PC-9 (cell line): ENCODE measurements at regions of chr4 and their contacts with region 1.

Region 1: GRCh38 chr4:140756319-140757231 is at the start of gene TBC1D9:
- DNase-seq: peak; percentile 80 to 84
- H3K4me3 ChIP-seq: peak within 1 kb of the TSS; percentile 78
- H3K27ac ChIP-seq: peak within 1 kb of the TSS; percentile 81
- H3K4me1 ChIP-seq: peaks cover 15% of the 10 kb centered on the region
- H3K27me3 ChIP-seq: no peaks in the 10 kb centered on the region
- CTCF ChIP-seq: no peak
- total RNA-seq, gene TBC1D9: 17.0 and 17.6 TPM in 2 replicates

Region 2: GRCh38 chr4:140609548-140610425 is 146.8 kb before region 1 on chr4:
- CTCF ChIA-PET with region 1: no interaction called
- POLR2A ChIA-PET with region 1: no interaction called
- intact Hi-C with region 1: no loop called
- DNase-seq: no peak
- H3K4me3 ChIP-seq: no peak overlapping the region
- H3K27ac ChIP-seq: no peak overlapping the region
- H3K4me1 ChIP-seq: no peaks in the 10 kb centered on the region; the same call in 1 of the 2 replicates
- H3K27me3 ChIP-seq: no peaks in the 10 kb centered on the region
- CTCF ChIP-seq: peak; percentile 68

Region 3: DNA sequence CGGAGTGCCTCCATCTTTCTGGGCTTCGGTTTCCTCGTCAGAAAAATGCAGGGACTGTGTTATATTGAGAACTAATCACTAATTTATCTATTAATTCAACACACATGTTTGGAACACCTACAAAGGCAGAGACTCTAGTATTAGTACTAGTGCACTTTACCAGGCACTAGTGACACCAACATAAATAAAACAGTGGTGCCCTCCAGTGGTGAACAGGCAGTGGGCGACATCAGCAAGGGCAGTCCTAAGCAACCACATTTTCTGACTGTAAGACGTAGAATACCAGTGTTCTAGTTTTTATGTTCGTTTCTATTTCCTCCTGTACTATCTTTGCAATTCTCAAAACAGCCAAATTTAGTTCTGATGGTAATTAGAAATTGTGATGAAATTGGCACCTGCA is 118.7 kb before region 1 on chr4:
- CTCF ChIA-PET with region 1: no interaction called
- POLR2A ChIA-PET with region 1: interaction called, 7 read pairs
- intact Hi-C with region 1: loop called (anchors 2 kb)
- DNase-seq: no peak
- H3K4me3 ChIP-seq: no peak overlapping the region
- H3K27ac ChIP-seq: no peak overlapping the region
- H3K4me1 ChIP-seq: peaks cover 23% of the 10 kb centered on the region
- H3K27me3 ChIP-seq: no peaks in the 10 kb centered on the region
- CTCF ChIP-seq: peak; percentile 63

Region 4: GRCh38 chr4:140726776-140727500 is 29.6 kb before region 1 on chr4:
- CTCF ChIA-PET with region 1: no interaction called
- POLR2A ChIA-PET with region 1: interaction called, 16 read pairs
- intact Hi-C with region 1: loop called (anchors 1 kb)
- DNase-seq: peak; percentile 29 to 89
- H3K4me3 ChIP-seq: peak overlapping the region; percentile 31; the same call in 1 of the 2 replicates
- H3K27ac ChIP-seq: peak overlapping the region; percentile 85
- H3K4me1 ChIP-seq: peaks cover 53% of the 10 kb centered on the region
- H3K27me3 ChIP-seq: no peaks in the 10 kb centered on the region
- CTCF ChIP-seq: no peak

Region 5: DNA sequence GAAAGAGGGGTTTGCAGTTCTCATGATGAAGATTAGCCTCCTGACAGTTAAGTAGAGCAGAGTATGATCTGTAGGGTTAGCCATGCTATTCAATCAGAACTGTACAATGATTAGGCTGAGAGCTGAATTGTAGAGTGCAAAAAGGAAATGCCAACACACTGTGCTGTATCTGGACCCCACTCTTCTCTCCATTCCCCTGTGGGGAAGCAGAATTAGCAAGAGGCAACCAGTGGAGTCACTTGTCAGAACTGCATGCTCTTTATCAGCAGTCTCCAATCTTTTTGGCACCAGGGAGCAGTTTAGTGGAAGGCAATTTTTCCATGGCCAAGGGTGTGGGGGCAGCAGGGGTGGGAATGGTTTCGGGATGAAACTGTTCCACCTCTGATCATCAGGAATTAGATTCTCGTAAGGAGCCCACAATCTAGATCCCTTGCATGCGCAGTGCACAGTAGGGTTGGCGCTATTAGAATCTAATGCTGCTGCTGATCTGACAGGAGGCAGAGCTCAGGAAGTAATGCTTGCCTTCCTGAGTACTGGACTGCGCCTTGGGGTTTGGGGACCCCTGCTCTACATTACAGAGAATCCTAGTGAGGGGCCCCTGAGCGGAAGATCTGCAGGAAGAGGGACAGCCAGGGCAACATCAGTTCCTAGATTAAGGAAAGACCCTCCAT is 19.8 kb before region 1 on chr4:
- CTCF ChIA-PET with region 1: no interaction called
- POLR2A ChIA-PET with region 1: interaction called, 35 read pairs
- intact Hi-C with region 1: no loop called
- DNase-seq: no peak
- H3K4me3 ChIP-seq: no peak overlapping the region
- H3K27ac ChIP-seq: no peak overlapping the region
- H3K4me1 ChIP-seq: peaks cover 13% of the 10 kb centered on the region
- H3K27me3 ChIP-seq: no peaks in the 10 kb centered on the region
- CTCF ChIP-seq: no peak

Region 6: DNA sequence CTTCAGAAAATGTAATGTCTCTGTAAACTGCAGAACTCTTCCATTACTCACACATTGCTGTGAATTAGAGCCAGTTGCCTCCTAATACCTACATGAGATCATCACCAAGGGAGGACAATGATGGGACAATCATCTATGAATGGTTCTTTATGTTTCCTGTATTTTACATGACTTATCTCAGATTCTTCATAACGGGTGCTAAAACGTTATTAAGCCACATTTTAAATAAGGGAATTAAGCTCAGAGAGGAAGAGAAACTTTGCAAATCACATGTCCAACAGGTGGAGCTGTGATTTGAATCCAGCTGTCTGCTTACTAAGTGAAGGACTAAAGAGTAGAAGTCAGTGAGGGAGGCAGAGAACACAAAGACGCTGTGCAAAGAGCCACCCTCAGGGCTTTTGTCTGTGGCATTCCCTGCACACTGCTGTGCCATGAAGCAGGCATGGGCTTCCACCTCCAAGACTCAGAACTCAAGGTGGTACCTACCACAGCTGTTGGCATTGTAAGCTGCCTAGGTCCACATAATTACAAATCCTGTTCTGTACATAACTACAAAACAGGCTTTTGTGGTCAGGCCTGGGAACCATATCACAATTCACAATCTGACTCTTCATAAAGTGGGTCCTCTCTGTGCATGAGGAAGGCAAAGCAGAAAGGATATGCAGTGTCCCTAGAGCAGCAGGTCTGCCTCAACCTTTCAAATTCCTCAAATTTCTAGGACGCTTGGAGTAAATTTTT is 13.2 kb before region 1 on chr4:
- CTCF ChIA-PET with region 1: interaction called, 3 read pairs
- POLR2A ChIA-PET with region 1: no interaction called
- intact Hi-C with region 1: loop called (anchors 1 kb)
- DNase-seq: peak in 1 of 2 experiments; percentile 28
- H3K4me3 ChIP-seq: no peak overlapping the region
- H3K27ac ChIP-seq: no peak overlapping the region
- H3K4me1 ChIP-seq: peaks cover 21% of the 10 kb centered on the region
- H3K27me3 ChIP-seq: no peaks in the 10 kb centered on the region
- CTCF ChIP-seq: no peak; the same call in 1 of the 2 replicates

Region 7: DNA sequence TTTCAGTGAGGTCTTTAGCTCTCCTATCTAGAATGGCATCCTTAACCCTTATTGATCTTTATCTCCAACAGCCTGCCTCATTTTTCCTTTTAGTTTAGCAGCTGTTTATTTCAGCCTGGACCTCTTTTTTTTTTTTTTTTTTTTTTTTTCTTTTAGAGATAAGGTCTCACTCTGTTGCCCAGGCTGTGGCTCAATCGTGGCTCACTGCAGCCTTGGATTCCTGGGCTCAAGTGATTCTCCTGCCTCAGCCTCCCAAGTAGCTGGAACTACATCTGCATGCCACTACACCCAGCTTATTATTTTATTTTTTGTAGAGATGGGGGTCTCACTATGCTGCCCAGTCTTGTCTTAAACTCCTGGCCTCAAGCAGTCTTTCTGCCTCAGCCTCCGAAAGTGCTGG is 42.5 kb after region 1 on chr4:
- CTCF ChIA-PET with region 1: no interaction called
- POLR2A ChIA-PET with region 1: interaction called, 12 read pairs
- intact Hi-C with region 1: no loop called
- DNase-seq: no peak
- H3K4me3 ChIP-seq: no peak overlapping the region
- H3K27ac ChIP-seq: no peak overlapping the region
- H3K4me1 ChIP-seq: no peaks in the 10 kb centered on the region
- H3K27me3 ChIP-seq: no peaks in the 10 kb centered on the region
- CTCF ChIP-seq: no peak